Dendritic cell treated with granulocyte-macrophage colony-stimulating factor and Interleukin-4, amounts not matched to agents 40 ng/mL and 50 ng/mL, for 4 days (primary cell): ENCODE measurements at regions of chr7 and their contacts with region 1.

Region 1: GRCh38 chr7:43721193-43721806 is 8.0 kb downstream of the COA1 start:
- H3K4me3 Mint-ChIP-seq: no peak overlapping the region
- H3K27ac Mint-ChIP-seq: no peak overlapping the region
- H3K4me1 Mint-ChIP-seq: peaks cover 43% of the 10 kb centered on the region
- H3K27me3 Mint-ChIP-seq: no peaks in the 10 kb centered on the region

Region 2: DNA sequence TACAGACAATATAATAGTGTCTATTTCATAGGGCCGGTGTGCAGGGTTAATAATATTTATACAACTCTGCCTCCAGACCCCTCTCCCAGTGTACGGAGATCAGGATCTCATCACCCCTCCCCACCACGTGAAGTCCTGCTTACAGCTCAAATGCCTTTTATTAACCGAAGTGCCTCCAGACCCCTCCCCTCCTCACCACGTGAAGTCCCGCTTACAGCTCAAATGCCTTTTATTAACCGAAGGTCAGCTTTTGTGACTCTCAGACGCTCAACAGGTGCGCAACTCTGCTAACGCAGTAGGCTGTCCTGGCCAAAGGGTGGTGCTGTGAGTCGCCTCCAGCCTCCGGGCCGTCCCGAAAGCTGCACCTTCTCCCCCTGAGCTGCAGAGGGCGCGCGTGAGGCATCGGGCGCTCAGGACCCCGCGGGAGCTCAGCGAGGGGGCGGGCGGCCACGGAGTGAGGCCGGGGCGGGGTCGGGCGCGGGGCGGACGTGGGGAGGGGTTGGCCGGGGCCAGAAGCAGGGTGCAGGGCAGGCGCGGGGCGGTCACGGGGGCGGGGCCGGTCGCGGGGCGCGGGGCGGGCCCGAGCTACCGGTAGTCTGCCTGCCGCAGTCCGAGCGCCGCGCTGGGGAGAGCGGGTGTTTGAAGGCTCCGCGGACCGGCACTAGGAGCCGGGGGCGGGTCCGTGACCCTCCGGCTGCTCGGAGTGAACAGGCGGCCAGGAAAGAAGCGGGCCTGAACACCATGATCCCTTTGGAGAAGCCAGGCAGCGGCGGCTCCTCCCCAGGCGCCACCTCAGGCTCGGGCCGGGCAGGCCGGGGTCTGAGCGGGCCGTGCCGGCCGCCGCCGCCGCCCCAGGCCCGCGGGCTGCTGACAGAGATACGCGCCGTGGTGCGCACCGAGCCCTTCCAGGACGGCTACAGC is 138.5 kb before region 1 on chr7 and contains the start of gene STK17A:
- intact Hi-C with region 1: loop called (anchors 5 kb)
- H3K4me3 Mint-ChIP-seq: peak within 1 kb of the TSS; percentile 94
- H3K27ac Mint-ChIP-seq: peak within 1 kb of the TSS; percentile 86
- H3K4me1 Mint-ChIP-seq: peaks cover 24% of the 10 kb centered on the region
- H3K27me3 Mint-ChIP-seq: peaks cover 21% of the 10 kb centered on the region